ENCODE measurements at regions of chr7 and their contacts with region 1.

Region 1: DNA sequence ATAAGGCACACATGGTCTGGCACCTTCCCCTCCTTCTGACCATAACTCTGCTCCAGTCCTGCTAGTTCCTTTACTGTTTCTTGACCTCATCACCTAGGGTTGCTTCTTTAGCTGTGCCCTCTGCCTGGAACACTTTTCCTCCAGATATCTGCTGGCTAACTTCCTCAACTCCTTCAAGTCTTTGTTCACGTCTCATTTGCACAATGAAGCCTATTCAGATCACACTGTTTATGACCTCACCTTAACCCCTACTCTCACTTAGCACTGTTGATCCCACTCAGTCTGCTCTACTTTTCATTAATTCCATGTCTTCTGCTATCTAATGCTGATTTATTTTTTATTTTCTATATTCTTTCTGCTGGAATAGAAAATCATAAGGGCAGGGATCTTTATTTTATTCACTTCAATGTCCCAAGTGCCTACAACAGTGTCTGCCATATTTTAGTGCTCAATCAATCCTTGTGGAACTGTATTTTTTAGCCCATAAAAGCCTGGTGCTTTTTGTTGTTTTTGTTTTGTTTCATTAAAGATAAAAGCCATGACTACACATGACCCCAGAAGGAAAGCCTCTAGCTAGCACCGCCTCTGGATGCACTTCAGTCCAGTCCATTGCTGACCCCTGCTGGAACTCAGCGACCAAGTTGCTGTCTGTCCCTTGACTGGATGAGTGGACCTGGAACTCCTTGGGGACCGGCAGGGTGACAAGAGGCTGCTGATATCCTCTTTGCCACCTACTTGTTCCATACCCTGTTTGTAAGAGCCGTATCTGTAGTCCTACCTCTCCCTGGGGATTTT is 12.3 kb downstream of the KLF14 start:
- DNase-seq: peak; percentile 84
- ATAC-seq: peak; percentile 93

Region 2: DNA sequence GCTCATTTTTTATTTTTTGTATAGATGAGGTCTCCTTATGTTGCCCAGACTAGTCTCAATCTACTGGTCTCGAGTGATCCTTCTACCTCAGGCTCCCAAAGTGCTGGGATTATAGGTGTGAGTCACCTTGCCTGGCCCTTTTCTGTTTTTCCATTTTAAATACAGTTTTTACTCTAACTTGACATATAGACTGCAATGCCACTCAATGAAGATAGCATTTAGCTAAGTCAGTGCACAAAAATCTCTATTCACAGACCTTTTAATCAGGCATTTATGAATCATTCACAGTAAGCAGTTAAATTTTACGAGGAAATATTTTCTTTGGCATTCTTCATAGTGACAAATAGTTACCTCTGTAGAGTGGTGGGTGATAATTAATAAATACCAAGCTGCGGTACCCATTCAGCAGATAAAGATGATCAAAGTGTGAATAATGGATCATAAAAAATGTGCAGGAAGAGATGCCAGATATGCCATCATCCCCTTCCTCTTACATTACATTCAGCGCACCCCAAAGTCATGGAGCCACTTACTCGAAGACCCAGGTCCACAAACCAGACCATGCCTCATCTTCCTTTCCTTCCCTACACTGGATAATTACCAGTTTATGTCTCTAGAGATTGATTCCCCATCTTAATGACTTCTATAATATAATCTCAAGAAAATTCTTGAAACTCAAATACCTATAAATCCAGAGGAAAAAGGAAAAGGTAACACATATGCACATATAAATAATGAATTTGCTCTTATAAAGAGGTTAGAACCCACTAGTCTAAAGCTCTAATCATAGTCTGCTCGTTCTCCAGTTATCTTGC is 824.9 kb before region 1 on chr7:
- intact Hi-C with region 1: no loop called
- DNase-seq: no peak
- ATAC-seq: no peak

Region 3: DNA sequence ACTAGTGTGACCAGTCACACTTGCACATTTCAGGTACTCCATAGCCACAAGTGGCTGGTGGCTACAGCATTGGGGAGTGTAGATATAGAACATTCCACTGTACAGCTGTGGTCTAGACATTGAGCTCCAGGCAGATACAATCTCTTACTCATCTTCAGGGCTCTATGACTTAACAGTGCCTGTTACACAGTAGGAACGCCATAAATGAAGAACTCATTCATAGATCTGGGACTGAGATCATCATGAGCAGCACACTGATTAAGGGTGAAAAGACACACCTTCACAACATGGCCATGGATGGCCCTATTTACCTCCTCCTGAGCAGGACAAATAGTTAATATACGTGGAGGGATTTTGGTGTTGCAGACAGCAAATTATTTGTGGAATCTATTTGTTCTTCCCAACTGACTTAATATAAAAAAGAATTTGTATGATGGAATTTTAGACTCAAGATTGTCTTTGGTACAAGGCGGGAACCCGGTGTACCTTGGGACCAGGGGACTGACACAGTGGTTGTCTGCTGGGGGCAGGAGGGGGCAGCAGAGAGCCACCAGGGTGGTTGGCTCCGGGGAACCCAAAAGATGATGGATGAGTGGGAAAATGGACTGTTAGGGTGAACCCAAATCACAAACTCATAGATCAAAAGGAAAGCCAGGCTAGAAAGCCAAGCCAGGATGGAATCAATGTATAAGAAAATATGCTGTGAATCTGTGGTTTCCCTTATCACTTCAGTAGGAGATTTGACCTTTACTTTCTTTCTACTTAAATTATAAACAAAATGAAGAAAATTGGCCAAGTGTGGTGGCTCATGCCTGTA is 479.3 kb before region 1 on chr7:
- intact Hi-C with region 1: loop called (anchors 5 kb)
- DNase-seq: peak; percentile 65
- ATAC-seq: peak; percentile 75

Region 4: GRCh38 chr7:130649004-130649790 is 72.5 kb before region 1 on chr7:
- intact Hi-C with region 1: no loop called
- DNase-seq: no peak
- ATAC-seq: no peak

Region 5: DNA sequence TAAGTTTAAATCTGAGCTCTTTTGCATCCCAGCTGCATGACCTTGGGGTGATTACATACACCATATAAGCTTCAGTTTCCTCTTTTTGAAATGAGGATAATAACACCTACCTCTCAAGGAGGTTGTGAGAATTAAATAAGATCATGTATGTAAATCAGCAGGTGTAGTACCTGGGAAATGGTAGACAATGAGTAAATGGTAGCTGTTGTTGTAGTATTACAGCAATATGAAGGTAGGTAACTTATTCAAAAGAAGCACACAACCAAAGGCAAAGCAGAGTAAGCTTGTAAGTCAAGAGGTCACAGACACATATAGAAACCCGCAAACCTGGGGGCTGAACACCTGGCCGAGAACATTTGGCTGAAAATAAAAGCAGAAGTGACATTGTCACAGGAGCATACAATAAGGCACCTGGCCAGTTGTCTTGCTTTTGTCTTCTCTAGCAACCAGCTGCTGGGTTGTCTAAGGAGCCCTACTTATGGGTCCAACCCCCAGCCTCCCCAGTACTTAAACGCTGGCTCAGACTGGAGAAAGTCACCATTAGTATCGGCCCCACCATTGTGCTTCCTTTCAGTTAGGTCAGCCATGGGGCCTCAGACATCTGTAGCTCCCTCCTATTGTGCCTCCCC is 402.4 kb after region 1 on chr7:
- intact Hi-C with region 1: no loop called
- DNase-seq: no peak
- ATAC-seq: no peak